Right cardiac atrium (tissue), 5 donors: ENCODE measurements at regions of chr10 and their contacts with region 1.

Region 1: DNA sequence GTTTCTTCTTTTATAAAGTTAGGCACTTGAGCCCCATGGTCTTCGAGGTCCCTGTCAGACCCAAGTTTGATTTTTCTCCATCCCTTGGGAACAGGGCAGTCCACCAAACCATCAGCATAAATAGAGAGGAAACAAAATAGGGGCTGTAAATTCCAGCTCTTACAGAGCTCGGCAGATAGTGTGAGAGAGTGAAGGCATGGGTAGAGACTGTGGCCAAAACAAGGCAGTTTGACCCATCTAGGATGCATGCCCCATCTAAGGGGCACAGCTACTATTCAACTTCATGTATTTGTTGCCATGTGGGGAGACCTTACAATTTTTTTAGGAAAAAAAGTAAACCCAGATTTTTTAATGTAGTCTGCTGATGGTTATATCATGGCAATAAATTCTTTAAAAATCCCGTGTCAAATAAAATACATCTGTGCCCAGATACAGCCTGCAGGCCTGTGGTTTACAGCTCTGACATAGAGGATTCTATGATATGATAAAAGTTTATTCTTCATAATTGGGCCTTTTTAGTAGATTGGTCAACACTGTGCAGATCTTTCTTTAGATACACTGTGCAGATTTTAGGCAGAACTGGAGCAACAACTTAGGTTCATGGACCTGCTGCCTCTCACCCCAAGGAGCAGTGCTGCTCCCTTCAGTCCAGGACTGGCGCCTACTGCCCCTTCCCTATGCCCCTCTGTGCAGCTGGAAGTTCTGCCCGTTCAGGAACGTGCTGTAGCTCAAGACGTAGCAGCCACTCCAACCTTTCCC is 5.3 kb downstream of the PPP1R3C start:
- DNase-seq: no peak
- ATAC-seq: peak; percentile 11 to 35
- H3K4me3 ChIP-seq: peak overlapping the region; percentile 84
- H3K27ac ChIP-seq: peak overlapping the region; percentile 68
- H3K4me1 ChIP-seq: peaks cover 3% of the 10 kb centered on the region
- H3K27me3 ChIP-seq: no peaks in the 10 kb centered on the region

Region 2: GRCh38 chr10:91163269-91163868 is 464.2 kb before region 1 on chr10:
- intact Hi-C with region 1: no loop called
- DNase-seq: peak; percentile 79 to 89 (median 88)
- ATAC-seq: peak; percentile 60 to 72
- H3K4me3 ChIP-seq: peak overlapping the region; percentile 99
- H3K27ac ChIP-seq: peak overlapping the region; percentile 85
- H3K4me1 ChIP-seq: peaks cover 4% of the 10 kb centered on the region
- H3K27me3 ChIP-seq: no peaks in the 10 kb centered on the region

Region 3: GRCh38 chr10:91590142-91590903 is 37.2 kb before region 1 on chr10:
- intact Hi-C with region 1: loop called in 2 of 4 experiments (anchors 5 kb)
- DNase-seq: peak; percentile 79 to 90 (median 89)
- ATAC-seq: peak; percentile 62 to 72
- H3K4me3 ChIP-seq: no peak overlapping the region
- H3K27ac ChIP-seq: peak overlapping the region; percentile 96
- H3K4me1 ChIP-seq: peaks cover 24% of the 10 kb centered on the region
- H3K27me3 ChIP-seq: no peaks in the 10 kb centered on the region

Region 4: DNA sequence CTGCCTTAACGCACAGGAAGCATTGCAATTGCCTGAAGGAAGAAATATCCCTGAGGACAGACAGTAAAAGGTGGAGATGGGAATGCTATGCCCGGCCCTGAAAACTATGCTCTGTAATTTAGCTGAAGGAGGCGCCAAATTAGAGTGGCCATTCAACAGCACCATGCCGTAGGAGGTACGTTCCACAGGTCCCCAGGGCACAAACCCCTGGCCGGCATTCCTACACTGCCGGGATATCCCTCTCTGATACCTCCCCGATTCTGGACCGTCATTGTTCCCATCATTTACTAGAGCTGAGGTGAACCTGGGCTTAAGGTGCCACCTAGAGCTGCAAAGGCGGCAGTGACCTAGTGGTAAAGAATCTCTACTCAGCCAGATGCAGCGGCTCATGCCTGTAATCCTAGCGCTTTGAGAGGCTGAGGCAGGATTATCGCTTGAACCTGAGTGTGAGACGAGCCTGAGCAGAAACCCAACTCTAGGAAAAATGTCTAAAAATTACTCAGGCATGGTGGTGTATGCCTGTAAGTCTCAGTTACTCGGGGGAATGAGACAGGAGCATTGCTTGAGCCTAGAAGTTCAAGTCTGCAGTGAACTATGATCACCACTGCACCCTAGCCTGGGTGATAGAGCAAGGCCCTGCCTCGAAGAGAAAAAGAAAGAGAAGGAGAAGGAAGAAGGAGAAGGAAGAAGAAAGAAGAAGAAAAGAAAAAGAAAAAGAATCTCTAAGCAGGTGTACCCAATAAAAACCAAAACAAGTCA is 117.7 kb after region 1 on chr10:
- intact Hi-C with region 1: no loop called
- DNase-seq: peak in 1 of 3 donors; percentile 30
- ATAC-seq: peak in 1 of 2 donors; percentile 56
- H3K4me3 ChIP-seq: no peak overlapping the region
- H3K27ac ChIP-seq: no peak overlapping the region
- H3K4me1 ChIP-seq: no peaks in the 10 kb centered on the region
- H3K27me3 ChIP-seq: no peaks in the 10 kb centered on the region

Region 5: GRCh38 chr10:91805110-91805838 is 177.8 kb after region 1 on chr10:
- intact Hi-C with region 1: no loop called
- DNase-seq: no peak
- ATAC-seq: no peak
- H3K4me3 ChIP-seq: no peak overlapping the region
- H3K27ac ChIP-seq: no peak overlapping the region
- H3K4me1 ChIP-seq: peaks cover 13% of the 10 kb centered on the region
- H3K27me3 ChIP-seq: no peaks in the 10 kb centered on the region